Mammary epithelial cell (primary cell): ENCODE measurements at regions of chr10 and their contacts with region 1.

Region 1: GRCh38 chr10:60955957-60956425 is 12.0 kb upstream of the RHOBTB1 start:
- DNase-seq: peak; percentile 70
- H3K4me3 ChIP-seq: no peak overlapping the region
- H3K27ac ChIP-seq: peak overlapping the region; percentile 20
- H3K4me1 ChIP-seq: peaks cover 14% of the 10 kb centered on the region
- H3K27me3 ChIP-seq: no peaks in the 10 kb centered on the region
- CTCF ChIP-seq: no peak

Region 2: GRCh38 chr10:60932756-60933155 is 23.2 kb before region 1 on chr10:
- CTCF ChIA-PET with region 1: no interaction called
- dilution Hi-C with region 1: no loop called
- in situ Hi-C with region 1: no loop called
- intact Hi-C with region 1: loop called (anchors 1 kb)
- DNase-seq: no peak
- H3K4me3 ChIP-seq: no peak overlapping the region
- H3K27ac ChIP-seq: no peak overlapping the region
- H3K4me1 ChIP-seq: no peaks in the 10 kb centered on the region
- H3K27me3 ChIP-seq: no peaks in the 10 kb centered on the region
- CTCF ChIP-seq: no peak

Region 3: DNA sequence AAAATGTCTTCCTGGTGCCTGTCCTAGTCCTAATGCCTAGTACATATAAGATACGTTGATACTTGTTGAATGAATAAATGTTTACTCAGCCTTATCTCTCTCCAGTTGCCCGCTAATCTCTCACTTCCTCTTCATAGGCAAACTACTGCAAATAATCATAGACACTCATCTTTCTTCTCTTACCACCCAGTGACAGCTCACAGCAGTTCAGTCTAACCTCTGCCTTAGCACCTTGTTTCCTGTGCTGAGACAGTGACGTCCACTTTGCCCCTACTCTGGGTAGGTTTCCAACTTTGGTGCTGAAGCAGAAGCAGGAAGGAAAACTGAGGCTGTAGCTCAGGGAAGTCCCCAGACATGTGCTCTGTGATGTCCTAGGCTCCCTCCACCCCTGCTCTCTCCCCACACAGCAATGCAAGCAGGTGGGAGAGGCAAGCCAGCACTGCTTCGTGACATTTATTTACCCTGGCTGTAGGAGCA is 33.4 kb after region 1 on chr10:
- CTCF ChIA-PET with region 1: interaction called, 15 read pairs
- dilution Hi-C with region 1: no loop called
- in situ Hi-C with region 1: no loop called
- intact Hi-C with region 1: no loop called
- DNase-seq: no peak
- H3K4me3 ChIP-seq: no peak overlapping the region
- H3K27ac ChIP-seq: no peak overlapping the region
- H3K4me1 ChIP-seq: no peaks in the 10 kb centered on the region
- H3K27me3 ChIP-seq: no peaks in the 10 kb centered on the region
- CTCF ChIP-seq: no peak